Left cardiac atrium (tissue), 4 donors: ENCODE measurements at regions of chr2 and their contacts with region 1.

Region 1: DNA sequence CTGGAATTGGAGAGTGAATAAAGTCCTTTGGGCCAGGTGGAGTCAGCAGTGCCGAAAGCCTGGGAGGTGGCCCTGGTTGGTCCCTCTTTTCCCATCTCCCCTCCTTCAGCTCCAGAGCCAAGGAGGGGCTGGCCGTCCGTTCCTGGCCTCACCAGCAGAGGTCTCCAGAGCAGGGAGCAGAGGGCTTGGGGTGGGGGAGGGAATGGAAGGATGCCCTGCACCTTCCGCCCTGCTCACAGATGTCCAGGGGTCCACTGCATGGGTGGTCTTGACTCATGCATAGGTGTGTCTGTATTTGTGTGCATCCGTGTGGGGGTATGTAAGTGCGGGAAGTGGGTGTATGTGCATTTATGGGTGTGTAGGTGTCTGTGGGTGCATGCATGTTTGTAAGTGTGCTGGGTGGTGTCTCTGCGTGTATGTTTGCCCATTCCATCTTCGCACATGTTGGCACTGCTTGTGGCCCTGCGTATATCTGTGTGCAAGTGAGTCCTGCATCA is 201.8 kb downstream of the ZFP36L2 start:
- DNase-seq: peak; percentile 73
- ATAC-seq: peak; percentile 71 to 79

Region 2: GRCh38 chr2:42169100-42169873 is 855.3 kb before region 1 on chr2 and contains the start of gene EML4:
- intact Hi-C with region 1: no loop called
- DNase-seq: peak; percentile 91
- ATAC-seq: peak; percentile 97 to 98
- total RNA-seq, gene EML4: 8.5 to 12.4 TPM

Region 3: GRCh38 chr2:42859006-42859552 is 165.5 kb before region 1 on chr2:
- intact Hi-C with region 1: no loop called
- DNase-seq: no peak
- ATAC-seq: no peak

Region 4: DNA sequence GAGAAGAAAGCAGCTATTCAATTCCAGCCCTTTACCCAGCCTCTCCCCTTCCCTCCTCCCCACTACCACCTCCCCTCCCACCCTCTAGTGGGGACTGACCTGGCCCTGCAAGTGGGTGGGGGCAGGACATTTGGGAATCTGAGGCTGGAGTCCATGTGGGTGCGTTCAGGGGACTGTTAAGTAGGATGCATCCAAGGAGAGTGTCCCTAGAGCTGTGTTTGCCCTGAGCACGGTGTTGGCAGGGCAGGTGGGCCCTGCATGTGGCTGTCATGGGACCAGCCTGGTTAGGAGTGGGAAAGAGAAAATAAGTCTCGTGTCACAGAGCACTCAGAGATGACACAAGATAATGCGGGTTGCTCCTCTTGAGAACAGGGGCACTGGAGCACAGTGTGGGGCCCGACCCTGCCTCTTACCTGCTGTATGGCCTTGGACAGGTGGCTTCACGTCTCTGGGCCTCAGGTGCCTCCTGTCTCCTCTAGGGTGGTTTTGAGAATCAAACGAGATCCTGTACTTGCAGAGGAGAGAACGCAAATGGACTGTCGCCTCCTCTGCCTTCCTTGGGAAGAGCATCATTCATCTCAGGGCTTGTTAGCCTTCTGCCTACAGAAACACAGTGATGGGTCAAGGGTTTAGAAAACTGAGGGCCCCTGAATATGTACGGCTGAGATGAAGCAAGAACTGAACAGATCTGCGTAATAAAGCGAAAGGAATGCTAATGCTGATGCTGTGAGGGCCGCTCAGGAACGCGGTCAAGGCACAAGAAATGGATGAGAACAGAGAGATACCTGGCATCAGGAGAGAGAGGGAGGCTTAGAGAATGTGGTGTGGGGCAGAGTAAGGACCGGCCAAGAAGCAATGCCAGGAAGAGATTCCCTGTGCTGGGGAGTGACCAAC is 44.4 kb before region 1 on chr2:
- intact Hi-C with region 1: loop called in 1 of 2 experiments (anchors 5 kb)
- DNase-seq: no peak
- ATAC-seq: no peak

Region 5: DNA sequence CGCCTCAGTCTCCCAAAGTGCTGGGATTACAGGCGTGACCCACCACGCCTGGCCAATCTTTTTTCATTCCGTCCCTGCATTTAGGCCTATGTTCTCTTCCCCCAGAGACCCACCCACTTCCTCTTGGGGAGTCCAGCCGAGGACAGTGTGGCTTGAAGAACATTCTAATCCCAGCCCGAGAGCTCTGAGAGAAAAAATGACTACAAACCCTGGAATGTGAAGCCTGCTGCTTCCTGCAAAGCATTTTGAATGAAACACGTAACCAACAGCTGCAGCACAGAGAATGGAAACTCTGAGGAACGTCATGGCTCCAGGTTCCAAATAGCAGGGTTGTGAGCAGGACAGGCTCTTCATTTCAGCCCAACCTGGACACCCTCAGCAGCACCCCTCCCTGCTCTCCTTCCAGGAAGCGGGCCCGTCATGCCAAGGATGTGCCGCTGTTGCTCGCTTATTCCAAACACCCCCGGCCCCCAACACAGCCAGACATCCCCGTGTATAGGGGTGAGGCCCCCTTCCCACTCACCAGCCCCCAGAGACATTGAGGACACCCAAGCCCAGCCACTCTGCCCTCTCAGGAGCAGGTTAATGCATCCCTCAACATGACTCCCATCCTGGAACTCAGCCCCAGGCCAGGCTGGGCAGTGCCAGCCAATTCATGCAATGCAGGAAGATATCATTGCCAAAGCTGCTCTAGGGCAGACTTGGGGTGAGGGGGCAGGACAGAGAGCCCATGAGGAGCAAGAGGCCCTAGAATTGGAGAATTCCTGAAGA is 62.1 kb after region 1 on chr2:
- intact Hi-C with region 1: loop called in 1 of 2 experiments (anchors 10 kb)
- DNase-seq: peak; percentile 80
- ATAC-seq: peak; percentile 74 to 84